PC-9 (cell line): ENCODE measurements at regions of chr19 and their contacts with region 1.

Region 1: DNA sequence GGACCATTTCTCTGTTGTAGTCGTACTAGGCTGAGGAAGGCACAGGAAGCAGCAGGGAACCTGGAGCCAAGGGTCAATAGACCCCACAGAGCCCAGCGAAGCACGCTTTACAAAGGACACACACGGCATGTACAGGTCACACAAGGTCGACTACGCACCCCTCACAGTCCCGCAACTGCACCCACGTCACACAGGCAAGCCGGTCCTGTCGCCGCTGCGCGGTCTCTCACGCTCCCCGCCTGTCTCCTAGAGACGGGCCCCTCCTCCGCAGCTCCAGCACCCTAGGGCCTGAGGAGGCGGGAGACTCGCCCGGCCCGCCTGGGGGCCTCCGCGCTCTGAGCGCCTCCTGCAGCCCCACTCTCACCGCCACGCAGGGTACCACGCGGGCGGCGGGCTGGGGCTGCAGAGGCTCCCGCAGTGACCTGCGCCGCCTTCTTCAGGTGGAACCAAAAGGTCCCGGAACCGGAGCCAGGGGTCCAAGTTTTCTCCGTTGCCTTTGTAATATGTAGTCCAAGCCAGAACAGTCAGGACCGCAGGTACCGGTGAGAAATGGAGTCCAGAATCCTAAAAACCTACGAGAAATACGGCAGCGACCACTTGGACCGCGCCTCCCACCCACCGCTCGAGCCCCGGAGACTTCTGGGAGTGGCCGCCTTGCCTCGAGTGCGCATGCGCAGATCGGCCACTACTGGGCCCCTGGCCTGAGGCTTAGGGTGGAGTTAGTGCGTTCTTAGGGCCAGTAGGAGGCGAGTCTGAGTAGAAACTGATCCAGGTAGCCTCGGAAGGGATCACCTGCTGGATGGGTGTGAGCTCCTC is at the start of gene ZNF607:
- DNase-seq: peak; percentile 88 to 92
- H3K4me3 ChIP-seq: peak within 1 kb of the TSS; percentile 60
- H3K27ac ChIP-seq: no peak within 1 kb of the TSS
- H3K4me1 ChIP-seq: peaks cover 11% of the 10 kb centered on the region; the same call in 1 of the 2 replicates
- H3K27me3 ChIP-seq: no peaks in the 10 kb centered on the region
- CTCF ChIP-seq: peak; percentile 74
- total RNA-seq, gene ZNF607: 10.6 and 12.5 TPM in 2 replicates

Region 2: DNA sequence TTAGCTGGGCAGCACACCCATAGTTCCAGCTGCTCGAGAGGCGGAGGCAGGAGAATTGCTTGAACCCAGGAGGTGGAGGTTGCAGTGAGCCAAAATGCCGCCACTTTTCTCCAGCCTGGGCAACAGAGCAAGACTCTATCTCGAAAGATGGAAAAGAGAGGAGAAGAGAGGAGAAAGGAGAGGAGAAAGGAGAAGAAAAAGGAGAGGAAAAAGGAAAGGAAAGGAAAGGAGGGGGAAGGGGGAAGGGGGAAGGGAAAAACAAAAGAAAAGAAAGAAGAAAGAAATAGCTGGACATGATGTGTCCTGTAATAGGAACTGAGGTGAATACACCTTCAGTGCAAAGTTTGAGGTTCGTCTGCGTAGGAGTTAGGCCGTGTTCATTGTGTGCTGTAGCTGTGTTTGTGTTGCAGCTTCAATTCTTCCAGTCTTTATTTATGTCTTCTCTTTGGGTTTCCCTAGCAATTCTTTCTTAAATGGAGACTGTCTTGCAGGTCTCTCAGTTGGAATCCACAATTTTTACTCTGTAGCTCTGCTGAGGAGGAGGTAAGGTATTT is 13.2 kb before region 1 on chr19:
- CTCF ChIA-PET with region 1: no interaction called
- POLR2A ChIA-PET with region 1: no interaction called
- intact Hi-C with region 1: no loop called
- DNase-seq: no peak
- H3K4me3 ChIP-seq: no peak overlapping the region
- H3K27ac ChIP-seq: no peak overlapping the region
- H3K4me1 ChIP-seq: no peaks in the 10 kb centered on the region
- H3K27me3 ChIP-seq: no peaks in the 10 kb centered on the region
- CTCF ChIP-seq: no peak

Region 3: GRCh38 chr19:37763488-37763887 is 44.2 kb after region 1 on chr19:
- CTCF ChIA-PET with region 1: no interaction called
- POLR2A ChIA-PET with region 1: no interaction called
- intact Hi-C with region 1: no loop called
- DNase-seq: peak in 1 of 2 experiments; percentile 44
- H3K4me3 ChIP-seq: no peak overlapping the region
- H3K27ac ChIP-seq: no peak overlapping the region
- H3K4me1 ChIP-seq: no peaks in the 10 kb centered on the region
- H3K27me3 ChIP-seq: no peaks in the 10 kb centered on the region
- CTCF ChIP-seq: no peak

Region 4: DNA sequence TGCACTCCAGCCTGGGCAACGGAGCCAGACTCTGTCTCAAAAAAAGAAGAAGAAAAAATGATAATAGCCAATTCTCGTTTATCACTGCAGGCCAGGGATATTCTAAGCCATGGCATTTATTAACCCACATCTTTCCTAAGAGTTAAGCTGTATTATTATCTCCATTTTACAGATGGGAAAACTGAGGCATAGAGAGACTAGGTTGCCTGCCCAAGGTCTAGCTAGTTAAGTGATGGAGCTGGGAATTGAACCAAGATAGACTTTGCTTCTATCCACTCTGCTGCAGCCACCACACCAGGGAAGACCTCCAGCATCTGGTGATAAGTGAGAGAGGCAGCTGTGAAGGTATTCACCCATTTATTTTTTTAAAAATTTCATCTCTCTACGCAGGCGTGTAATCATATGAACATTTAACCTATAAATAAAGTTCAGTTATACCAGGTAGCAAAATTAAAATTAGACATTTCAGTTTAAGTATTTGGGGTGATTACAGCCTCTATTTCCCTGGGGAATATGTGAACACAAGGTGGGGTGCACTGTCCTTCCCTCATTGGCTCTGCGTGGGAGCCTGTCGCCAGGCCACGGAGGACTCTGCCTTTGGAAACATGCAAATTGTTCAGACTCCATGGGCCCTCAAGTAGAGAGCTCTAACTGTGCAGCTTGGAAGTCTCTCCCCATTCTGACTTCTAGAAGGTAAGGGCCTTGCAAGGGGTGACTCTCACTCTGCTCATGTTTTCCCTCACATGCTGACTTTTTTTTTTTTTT is 345.5 kb after region 1 on chr19:
- CTCF ChIA-PET with region 1: interaction called, 10 read pairs
- POLR2A ChIA-PET with region 1: no interaction called
- intact Hi-C with region 1: no loop called
- DNase-seq: no peak
- H3K4me3 ChIP-seq: no peak overlapping the region
- H3K27ac ChIP-seq: no peak overlapping the region
- H3K4me1 ChIP-seq: peaks cover 6% of the 10 kb centered on the region
- H3K27me3 ChIP-seq: no peaks in the 10 kb centered on the region
- CTCF ChIP-seq: no peak